PC-9 (cell line): ENCODE measurements at regions of chr15 and their contacts with region 1.

Region 1: GRCh38 chr15:71448688-71449114 is 333.4 kb downstream of the THSD4 start:
- DNase-seq: peak; percentile 47
- H3K4me3 ChIP-seq: no peak overlapping the region
- H3K27ac ChIP-seq: no peak overlapping the region
- H3K4me1 ChIP-seq: peaks cover 46% of the 10 kb centered on the region
- H3K27me3 ChIP-seq: no peaks in the 10 kb centered on the region
- CTCF ChIP-seq: peak; percentile 83

Region 2: DNA sequence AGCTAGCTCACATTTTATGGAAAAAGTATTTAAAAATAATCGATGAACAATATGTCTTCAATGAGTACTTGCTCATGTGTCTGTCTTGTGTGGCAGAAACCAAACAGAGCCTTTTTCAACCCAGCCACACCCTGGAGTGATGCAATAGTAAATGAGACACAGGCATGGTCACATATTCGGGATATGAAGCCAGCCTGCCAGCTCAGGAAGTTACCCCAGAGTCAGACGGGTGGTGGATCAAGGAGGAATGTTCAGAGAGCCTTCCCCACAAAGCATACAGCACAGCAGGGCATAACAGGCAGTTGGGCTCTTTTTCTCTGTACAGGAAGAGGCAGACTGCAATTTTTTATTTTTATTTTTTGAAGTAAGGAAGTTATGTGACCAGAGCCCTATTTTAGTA is 622.1 kb before region 1 on chr15:
- CTCF ChIA-PET with region 1: no interaction called
- POLR2A ChIA-PET with region 1: no interaction called
- intact Hi-C with region 1: loop called (anchors 10 kb)
- DNase-seq: peak; percentile 40 to 80
- H3K4me3 ChIP-seq: no peak overlapping the region
- H3K27ac ChIP-seq: peak overlapping the region; percentile 90
- H3K4me1 ChIP-seq: peaks cover 30% of the 10 kb centered on the region
- H3K27me3 ChIP-seq: no peaks in the 10 kb centered on the region
- CTCF ChIP-seq: no peak

Region 3: DNA sequence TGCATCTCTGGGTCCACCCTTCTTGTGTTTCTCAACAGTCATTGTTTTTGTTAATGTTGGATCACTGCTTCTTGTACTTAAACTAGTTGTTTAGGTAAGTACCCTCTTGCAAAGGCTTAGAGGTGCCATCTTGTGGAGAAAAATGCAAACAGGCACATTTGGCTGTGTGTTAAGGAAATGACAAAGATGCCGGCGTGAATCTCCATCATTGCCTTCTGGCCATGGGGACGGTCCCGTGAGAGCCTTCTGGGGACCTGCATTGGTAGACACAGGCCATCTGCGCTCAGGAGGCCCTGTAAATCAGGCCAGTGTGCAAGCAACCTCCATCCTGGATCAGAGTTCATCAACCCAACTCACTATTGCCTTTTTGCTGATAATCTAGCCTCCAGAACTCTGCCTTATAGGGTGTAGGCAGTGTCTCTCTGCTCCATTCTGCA is 203.1 kb after region 1 on chr15:
- CTCF ChIA-PET with region 1: no interaction called
- POLR2A ChIA-PET with region 1: no interaction called
- intact Hi-C with region 1: loop called (anchors 1 kb)
- DNase-seq: peak in 1 of 2 experiments; percentile 17
- H3K4me3 ChIP-seq: no peak overlapping the region
- H3K27ac ChIP-seq: no peak overlapping the region
- H3K4me1 ChIP-seq: peaks cover 14% of the 10 kb centered on the region
- H3K27me3 ChIP-seq: no peaks in the 10 kb centered on the region
- CTCF ChIP-seq: peak; percentile 41; the same call in 1 of the 2 replicates